ENCODE measurements at regions of chr4 and their contacts with region 1.

Region 1: GRCh38 chr4:53039741-53040458 is 177.8 kb downstream of the RASL11B start:
- DNase-seq: no peak
- CTCF ChIP-seq: no peak

Region 2: DNA sequence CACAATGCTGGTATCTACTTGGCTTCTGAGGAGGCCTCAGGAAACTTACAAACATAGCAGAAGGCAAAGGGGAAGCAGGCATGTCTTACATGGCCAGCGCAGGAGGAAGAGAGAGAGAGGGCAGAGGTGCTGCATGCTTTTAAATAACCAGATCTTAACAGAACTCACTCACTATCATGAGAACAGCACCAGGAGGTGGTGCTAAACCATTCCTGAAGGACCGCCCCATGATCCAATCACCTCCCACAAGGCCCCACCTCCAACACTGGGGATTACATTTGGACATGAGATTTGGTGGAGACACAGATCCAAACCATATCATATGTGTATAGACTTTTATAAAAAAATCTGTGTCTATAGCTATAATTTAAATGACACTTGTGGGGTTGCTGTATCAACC is 240.1 kb before region 1 on chr4:
- in situ Hi-C with region 1: no loop called
- DNase-seq: no peak
- CTCF ChIP-seq: no peak

Region 3: DNA sequence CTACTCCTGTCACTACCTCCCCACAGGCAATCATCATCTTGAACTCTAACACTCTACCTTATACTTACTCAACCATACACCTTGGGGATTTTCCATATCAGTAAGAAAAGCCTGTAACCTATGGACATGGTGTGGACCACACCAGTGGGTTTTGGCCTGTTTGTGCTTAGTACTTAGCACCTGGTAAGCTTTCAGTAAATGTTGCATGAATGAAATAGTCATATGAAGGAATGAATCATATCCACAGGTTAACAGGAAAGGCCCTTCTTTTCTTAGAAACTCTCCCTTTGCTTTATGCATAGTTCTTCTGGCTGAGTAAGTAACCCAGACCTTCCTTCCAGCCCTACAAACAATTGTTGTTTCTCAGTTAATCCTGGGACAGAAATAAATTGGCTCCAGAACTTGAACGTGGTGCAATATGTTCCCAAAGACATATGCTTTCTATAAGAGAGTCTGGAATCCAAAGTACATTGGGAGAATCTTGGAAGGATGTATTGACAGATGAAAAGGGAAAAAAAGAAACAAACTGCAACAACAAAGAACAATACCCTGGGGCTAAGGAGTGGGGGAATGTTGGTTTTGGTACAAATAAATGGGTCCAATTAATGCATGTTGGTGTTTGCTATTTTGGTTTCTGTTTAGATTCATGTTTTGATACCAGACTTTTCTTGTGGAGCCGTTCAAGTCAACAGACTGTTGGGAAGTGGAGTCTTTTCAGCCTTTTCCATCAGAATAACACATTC is 150.0 kb before region 1 on chr4:
- in situ Hi-C with region 1: no loop called
- DNase-seq: no peak
- CTCF ChIP-seq: no peak

Region 4: DNA sequence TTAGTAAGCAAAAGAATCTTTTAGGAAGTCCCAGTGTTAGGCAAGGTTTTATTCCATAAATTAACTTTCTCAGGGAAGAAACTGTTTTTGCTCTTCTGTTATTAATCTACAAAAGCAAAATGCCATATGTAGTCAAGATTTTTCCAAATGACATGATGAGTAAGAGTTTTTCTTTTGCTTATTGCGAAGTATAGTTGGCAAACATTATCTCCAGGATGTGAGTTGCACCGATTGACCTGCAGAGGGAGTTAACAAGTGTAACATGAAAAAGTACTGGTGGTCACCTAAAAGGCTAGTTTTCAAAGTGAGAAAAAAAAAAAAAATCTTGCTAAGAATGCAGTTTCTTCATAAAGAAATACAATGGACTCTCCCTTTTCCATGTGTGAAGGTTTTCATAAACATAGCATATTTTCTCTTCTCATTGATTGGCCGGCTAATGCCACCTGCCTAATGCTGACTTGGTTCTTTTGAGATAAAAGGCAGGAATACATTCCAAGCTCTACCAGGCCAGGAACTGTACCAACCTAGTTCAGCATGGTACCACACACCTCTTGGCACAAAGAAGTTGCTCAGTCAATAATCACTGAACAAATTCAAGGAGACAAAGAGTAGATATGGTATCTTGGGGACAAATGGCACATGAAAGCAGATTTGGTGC is 451.2 kb after region 1 on chr4:
- in situ Hi-C with region 1: loop called (anchors 25 kb)
- DNase-seq: peak; percentile 40
- CTCF ChIP-seq: peak; percentile 38

Region 5: GRCh38 chr4:53734584-53735353 is 694.9 kb after region 1 on chr4:
- in situ Hi-C with region 1: no loop called
- DNase-seq: no peak
- CTCF ChIP-seq: no peak

Measured in GM13976 (cell line).